Transverse colon (tissue), 4 donors: ENCODE measurements at regions of chr1 and their contacts with region 1.

Region 1: DNA sequence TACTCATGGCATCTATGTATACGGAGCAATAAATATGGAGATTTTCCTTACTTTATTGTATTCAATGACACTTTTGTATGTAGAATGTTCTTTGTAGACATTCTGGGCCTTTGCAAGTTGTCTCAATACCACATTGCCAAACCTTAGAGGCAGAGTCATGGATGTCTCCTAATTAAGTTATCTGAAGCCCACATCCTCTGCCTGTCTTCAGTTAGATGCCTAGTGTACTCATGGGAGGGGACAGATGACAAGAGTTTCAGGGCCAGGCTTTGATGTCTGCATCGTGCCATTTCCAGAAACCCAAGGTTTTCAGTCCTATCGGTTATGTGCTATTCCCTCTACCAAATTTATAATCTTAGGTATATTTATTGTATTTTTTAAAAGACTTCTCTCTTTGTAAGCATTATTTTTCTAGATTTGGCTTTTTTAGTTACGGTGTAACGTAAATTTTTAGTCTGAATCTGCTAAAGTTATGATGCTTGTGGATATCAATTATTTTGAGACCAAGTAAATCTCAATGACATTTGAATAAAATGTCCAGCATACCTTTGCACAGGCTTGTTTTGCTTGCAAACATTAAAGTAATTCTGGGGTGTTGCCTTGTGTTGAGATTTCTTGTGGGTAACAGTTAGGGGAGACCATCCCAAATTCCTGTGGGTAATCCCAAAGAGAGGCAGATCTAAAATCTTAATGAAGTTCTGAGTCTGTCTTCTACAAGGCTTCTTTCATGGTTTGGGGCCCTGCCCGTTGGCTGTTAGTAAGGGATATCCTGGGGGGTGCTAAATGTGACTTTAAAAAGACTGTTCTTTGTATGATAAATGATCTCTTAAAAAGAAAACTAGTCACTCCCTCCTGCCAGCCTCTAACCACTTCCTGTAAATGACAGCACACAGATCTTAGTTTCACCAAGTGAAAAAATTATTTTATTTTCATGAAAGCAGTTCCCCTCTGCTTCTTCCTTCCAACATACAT is 8.0 kb upstream of the MACF1 start:
- DNase-seq: peak; percentile 26
- H3K4me3 ChIP-seq: no peak overlapping the region
- H3K27ac ChIP-seq: peak overlapping the region; percentile 75 to 86 (median 84)
- H3K4me1 ChIP-seq: peaks cover 24 to 60% (median 47%) of the 10 kb centered on the region in 4 donors
- H3K27me3 ChIP-seq: no peaks in the 10 kb centered on the region
- CTCF ChIP-seq: no peak
- EP300 ChIP-seq: no peak
- POLR2A ChIP-seq: no peak

Region 2: DNA sequence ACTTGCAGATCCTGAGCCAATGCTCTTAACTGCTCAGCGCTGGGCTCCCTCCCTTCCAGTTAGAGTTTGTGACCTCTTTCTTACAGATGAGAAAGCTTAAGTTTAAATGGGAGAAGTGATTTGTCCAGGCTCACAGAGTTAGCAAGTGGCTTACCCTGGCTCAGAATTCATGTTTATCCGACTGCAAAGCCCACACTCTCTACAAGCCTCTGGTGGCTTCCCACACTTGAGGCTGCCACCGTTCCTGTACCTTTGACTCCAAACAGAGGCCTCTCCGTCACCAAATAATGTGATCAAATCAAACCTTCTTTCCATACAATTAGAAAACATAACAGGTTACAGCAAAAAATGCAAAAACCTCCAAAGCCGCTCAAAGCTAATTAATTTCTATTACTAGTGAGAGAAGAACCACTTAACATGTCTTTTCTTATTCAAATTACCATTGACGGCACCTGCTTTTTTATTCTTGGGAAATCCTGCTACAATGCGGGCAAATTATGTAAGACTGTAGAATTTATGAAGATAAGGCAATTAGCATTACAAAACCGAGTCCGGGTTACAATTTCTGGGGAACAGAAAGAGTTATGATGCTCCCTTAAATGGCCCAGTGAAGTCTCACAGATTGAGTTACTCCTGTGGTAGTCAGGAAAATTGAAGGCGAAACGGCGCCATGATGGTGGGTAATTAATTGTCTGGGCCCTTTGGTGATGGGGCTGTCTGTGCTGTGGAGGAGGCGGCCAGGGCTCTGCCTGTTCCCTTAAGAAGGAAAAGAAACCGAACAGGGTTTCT is 825.6 kb before region 1 on chr1:
- in situ Hi-C with region 1: no loop called
- intact Hi-C with region 1: no loop called
- DNase-seq: no peak
- H3K4me3 ChIP-seq: no peak overlapping the region
- H3K27ac ChIP-seq: no peak overlapping the region
- H3K4me1 ChIP-seq: no peaks in the 10 kb centered on the region
- H3K27me3 ChIP-seq: peaks cover 5% of the 10 kb centered on the region
- CTCF ChIP-seq: no peak
- EP300 ChIP-seq: no peak
- POLR2A ChIP-seq: no peak

Region 3: GRCh38 chr1:39141925-39142324 is 54.6 kb before region 1 on chr1:
- in situ Hi-C with region 1: no loop called
- intact Hi-C with region 1: loop called (anchors 2 kb)
- DNase-seq: no peak
- H3K4me3 ChIP-seq: no peak overlapping the region
- H3K27ac ChIP-seq: peak overlapping the region; percentile 16 to 60 (median 53)
- H3K4me1 ChIP-seq: peaks cover 10 to 31% (median 22%) of the 10 kb centered on the region in 4 donors
- H3K27me3 ChIP-seq: no peaks in the 10 kb centered on the region
- CTCF ChIP-seq: no peak
- EP300 ChIP-seq: no peak
- POLR2A ChIP-seq: no peak

Region 4: DNA sequence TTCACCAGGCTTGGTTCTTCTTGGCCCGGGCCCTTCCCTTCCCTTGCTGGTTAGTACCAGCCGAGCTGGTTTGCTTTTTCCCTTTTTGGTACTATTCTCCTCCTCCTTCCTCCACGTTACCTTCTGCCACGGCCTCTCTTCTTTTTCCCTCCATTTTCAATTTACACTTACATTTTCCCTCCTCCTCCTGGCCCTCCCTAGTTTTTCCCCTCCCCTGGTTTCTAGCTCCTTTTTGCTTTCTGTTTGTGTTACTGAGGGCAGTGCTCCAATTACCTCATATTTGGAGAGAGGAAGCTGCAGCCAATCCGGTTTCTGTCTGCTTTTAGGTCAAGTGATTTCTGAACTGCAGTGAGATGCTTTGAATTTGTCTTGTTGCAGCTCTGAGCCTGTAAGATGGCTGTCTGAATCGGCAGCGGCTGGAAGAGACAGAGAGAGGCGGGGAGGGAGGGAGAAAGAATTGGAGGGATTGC is 71.6 kb after region 1 on chr1:
- in situ Hi-C with region 1: loop called in 2 of 4 experiments (anchors 10 kb)
- intact Hi-C with region 1: loop called (anchors 5 kb)
- DNase-seq: peak; percentile 20
- H3K4me3 ChIP-seq: peak overlapping the region; percentile 3 to 30 (median 9)
- H3K27ac ChIP-seq: peak overlapping the region; percentile 78 to 88 (median 84)
- H3K4me1 ChIP-seq: peaks cover 7 to 54% (median 27%) of the 10 kb centered on the region in 4 donors
- H3K27me3 ChIP-seq: no peaks in the 10 kb centered on the region
- CTCF ChIP-seq: no peak
- EP300 ChIP-seq: no peak
- POLR2A ChIP-seq: peak; percentile 39

Region 5: DNA sequence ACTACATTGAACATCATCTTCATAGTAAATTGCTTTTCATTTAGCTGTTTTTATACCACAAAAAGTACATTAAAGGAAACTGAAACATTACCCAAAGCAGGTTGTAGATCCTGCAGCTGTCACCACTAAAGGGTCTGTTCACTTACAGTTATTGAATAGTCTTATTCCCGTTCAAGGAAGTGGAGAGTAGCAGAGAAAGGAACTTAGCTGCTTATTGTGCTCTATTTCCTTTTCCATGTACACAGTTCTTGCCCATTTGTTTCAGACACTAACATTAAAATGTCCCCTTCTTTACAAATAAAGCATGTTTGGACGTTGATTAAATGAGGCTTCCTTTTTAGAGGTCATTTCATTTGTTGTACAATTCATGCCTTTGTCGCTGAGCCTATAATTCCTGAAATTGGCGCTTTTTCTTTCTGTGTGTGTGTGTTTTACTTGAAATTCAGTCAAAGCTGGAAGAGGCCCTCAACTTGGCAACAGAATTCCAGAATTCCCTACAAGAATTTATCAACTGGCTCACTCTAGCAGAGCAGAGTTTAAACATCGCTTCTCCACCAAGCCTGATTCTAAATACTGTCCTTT is 250.5 kb after region 1 on chr1:
- in situ Hi-C with region 1: no loop called
- intact Hi-C with region 1: no loop called
- DNase-seq: no peak
- H3K4me3 ChIP-seq: no peak overlapping the region
- H3K27ac ChIP-seq: no peak overlapping the region
- H3K4me1 ChIP-seq: no peaks in the 10 kb centered on the region
- H3K27me3 ChIP-seq: no peaks in the 10 kb centered on the region
- CTCF ChIP-seq: no peak
- EP300 ChIP-seq: no peak
- POLR2A ChIP-seq: no peak